Activated CD4-positive, alpha-beta memory T cell treated with anti-CD3 and anti-CD28 coated beads for 36 hours (primary cell): ENCODE measurements at regions of chr22 and their contacts with region 1.

Region 1: DNA sequence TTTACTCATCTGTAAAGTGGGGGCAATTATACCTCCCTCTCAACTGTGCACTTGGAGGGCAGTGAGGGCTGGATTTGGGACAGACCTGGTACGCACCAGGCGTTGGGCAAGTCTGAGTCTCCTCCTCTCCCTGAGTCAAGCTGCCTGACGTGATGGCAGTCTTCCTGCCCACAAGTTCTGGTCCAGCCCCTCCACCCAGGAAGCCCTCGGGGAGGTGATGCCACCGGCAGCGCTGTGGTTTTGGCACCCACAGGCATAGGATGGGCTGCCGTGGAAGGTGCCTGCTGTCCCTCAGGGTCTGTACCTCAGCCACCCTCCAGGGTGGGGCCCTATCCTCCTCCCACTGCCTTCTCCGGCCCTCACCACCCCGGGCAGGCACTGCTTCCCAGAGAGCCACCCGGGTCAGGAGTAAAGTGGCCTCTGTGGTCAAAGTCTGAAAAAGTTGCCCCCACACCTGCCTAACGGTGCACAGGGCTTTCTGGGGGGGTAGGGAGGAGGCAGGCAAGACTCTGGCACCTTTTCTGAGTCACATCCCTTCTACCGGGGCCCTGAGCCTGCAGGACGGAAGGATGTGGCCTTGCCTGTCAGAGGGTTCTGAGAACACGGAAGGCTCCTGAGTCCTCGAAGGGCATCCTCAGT is 6.5 kb upstream of the APOBEC3H start:
- DNase-seq: peak; percentile 95
- H3K4me3 Mint-ChIP-seq: peak overlapping the region; percentile 50
- H3K27ac Mint-ChIP-seq: peak overlapping the region; percentile 96
- H3K4me1 Mint-ChIP-seq: peaks cover 85% of the 10 kb centered on the region
- H3K27me3 Mint-ChIP-seq: no peaks in the 10 kb centered on the region

Region 2: DNA sequence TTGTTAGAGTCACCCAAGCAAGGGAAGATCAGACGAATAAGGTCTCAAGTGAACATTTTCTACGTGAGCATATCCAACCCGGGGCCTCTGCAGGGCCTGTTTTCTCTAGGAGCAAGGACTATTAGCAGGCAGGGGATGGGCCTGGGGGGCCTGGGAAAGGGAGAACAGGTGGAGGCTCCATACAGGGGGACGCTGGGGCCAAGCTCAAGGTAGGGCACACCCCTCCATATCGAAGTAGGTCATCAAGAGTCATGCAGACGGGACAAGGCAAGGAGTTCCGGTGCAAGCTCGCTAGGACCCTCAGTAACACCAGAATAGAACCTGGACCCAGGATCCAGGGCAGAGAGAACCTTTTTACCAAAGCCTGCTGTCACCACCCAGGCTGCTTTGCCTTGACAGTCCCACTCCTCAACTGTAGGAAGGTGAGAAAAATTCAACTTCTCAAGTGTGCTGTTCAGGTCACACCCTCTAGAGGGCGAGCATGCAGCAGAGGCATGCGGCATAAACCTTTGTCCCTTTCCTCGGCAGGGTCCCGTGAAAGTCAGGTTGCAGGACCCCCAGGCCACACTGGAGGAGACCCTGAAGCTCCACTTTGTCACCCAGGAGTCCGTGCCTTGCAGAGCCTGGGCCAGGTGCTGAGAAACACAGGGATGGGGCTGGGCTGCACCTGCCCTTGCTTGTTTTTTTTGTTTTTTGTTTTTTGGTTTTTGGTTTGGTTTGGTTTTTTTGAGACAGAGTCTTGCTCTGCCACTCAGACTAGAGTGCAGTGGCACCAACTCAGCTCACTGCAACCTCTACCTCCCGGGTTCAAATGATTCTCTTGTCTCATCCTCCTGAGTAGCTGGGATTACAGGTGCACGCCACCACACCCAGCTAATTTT is 117.0 kb before region 1 on chr22:
- CTCF ChIA-PET with region 1: no interaction called
- POLR2A ChIA-PET with region 1: no interaction called
- intact Hi-C with region 1: no loop called
- DNase-seq: peak; percentile 73
- H3K4me3 Mint-ChIP-seq: no peak overlapping the region
- H3K27ac Mint-ChIP-seq: no peak overlapping the region
- H3K4me1 Mint-ChIP-seq: peaks cover 7% of the 10 kb centered on the region
- H3K27me3 Mint-ChIP-seq: peaks cover 7% of the 10 kb centered on the region

Region 3: GRCh38 chr22:39013942-39014722 is 76.4 kb before region 1 on chr22 and contains the start of gene APOBEC3C:
- CTCF ChIA-PET with region 1: no interaction called
- POLR2A ChIA-PET with region 1: no interaction called
- intact Hi-C with region 1: loop called (anchors 1 kb)
- DNase-seq: peak; percentile 92
- H3K4me3 Mint-ChIP-seq: peak within 1 kb of the TSS; percentile 97
- H3K27ac Mint-ChIP-seq: peak within 1 kb of the TSS; percentile 96
- H3K4me1 Mint-ChIP-seq: peaks cover 48% of the 10 kb centered on the region
- H3K27me3 Mint-ChIP-seq: no peaks in the 10 kb centered on the region
- total RNA-seq, gene APOBEC3C: 141 to 142 TPM

Region 4: GRCh38 chr22:39021552-39022250 is 68.8 kb before region 1 on chr22:
- CTCF ChIA-PET with region 1: no interaction called
- POLR2A ChIA-PET with region 1: no interaction called
- intact Hi-C with region 1: loop called (anchors 5 kb)
- DNase-seq: no peak
- H3K4me3 Mint-ChIP-seq: peak overlapping the region; percentile 90
- H3K27ac Mint-ChIP-seq: peak overlapping the region; percentile 97
- H3K4me1 Mint-ChIP-seq: peaks cover 59% of the 10 kb centered on the region
- H3K27me3 Mint-ChIP-seq: no peaks in the 10 kb centered on the region